Naive thymus-derived CD4-positive, alpha-beta T cell (primary cell): ENCODE measurements at regions of chr9 and their contacts with region 1.

Region 1: GRCh38 chr9:665296-665695 is 176.2 kb upstream of the DMRT1 start:
- DNase-seq: no peak
- ATAC-seq: no peak
- H3K4me3 ChIP-seq: no peak overlapping the region
- H3K4me3 Mint-ChIP-seq: no peak overlapping the region
- H3K27ac ChIP-seq: no peak overlapping the region
- H3K27ac Mint-ChIP-seq: no peak overlapping the region
- H3K4me1 ChIP-seq: no peaks in the 10 kb centered on the region
- H3K4me1 Mint-ChIP-seq: peaks cover 0 to 4% (median 0%) of the 10 kb centered on the region in 7 donors
- H3K27me3 ChIP-seq: no peaks in the 10 kb centered on the region
- H3K27me3 Mint-ChIP-seq: peaks cover 0 to 19% (median 9%) of the 10 kb centered on the region in 5 donors

Region 2: DNA sequence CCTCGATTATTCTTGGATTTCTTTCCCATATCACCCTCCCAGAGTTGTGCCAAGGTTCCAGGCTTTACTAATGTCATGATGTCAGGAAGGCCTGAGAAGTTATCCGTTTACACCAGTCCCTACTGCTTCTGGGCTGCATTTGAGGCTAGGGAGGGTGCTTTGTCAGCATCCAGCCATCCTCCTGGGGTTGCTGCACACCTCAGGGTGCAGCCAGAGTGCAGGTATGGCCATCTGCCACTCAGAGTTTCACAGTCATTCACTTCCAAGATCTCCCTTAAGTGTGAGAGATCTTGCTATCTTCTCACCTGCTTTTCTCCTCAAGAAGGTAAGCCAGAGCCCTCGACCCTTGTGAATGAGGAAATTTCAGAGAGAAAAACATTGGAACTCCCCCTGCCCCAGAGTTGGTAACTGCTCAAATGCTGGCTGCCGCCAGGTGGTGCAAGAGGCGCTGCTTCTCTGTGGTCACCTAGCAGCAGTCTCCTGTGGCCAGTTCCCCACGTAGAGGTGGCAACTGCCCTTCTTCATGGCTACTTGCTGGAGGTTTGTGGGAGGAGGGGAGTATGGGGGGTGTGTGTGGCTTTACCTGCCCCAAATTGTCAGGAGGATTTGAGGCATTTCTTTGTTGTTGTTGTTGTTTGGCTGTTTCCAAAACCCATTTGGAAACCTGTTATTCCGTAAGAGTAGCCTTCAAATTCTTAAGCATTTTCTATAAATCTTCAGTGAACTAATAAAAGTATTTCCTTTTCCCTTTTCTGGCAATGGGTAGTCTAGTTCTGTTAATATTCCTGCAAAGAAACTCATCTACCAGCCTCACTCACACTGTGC is 83.4 kb before region 1 on chr9:
- CTCF ChIA-PET with region 1: no interaction called
- POLR2A ChIA-PET with region 1: no interaction called
- intact Hi-C with region 1: no loop called
- DNase-seq: no peak
- ATAC-seq: no peak
- H3K4me3 ChIP-seq: no peak overlapping the region
- H3K4me3 Mint-ChIP-seq: no peak overlapping the region
- H3K27ac ChIP-seq: no peak overlapping the region
- H3K27ac Mint-ChIP-seq: peak overlapping the region in 1 of 9 donors; percentile 48
- H3K4me1 ChIP-seq: no peaks in the 10 kb centered on the region
- H3K4me1 Mint-ChIP-seq: peaks cover 0 to under 1% (median 0%) of the 10 kb centered on the region in 7 donors
- H3K27me3 ChIP-seq: peaks cover 0 to 3% of the 10 kb centered on the region in 2 donors
- H3K27me3 Mint-ChIP-seq: peaks cover 0 to 4% (median 0%) of the 10 kb centered on the region in 5 donors

Region 3: DNA sequence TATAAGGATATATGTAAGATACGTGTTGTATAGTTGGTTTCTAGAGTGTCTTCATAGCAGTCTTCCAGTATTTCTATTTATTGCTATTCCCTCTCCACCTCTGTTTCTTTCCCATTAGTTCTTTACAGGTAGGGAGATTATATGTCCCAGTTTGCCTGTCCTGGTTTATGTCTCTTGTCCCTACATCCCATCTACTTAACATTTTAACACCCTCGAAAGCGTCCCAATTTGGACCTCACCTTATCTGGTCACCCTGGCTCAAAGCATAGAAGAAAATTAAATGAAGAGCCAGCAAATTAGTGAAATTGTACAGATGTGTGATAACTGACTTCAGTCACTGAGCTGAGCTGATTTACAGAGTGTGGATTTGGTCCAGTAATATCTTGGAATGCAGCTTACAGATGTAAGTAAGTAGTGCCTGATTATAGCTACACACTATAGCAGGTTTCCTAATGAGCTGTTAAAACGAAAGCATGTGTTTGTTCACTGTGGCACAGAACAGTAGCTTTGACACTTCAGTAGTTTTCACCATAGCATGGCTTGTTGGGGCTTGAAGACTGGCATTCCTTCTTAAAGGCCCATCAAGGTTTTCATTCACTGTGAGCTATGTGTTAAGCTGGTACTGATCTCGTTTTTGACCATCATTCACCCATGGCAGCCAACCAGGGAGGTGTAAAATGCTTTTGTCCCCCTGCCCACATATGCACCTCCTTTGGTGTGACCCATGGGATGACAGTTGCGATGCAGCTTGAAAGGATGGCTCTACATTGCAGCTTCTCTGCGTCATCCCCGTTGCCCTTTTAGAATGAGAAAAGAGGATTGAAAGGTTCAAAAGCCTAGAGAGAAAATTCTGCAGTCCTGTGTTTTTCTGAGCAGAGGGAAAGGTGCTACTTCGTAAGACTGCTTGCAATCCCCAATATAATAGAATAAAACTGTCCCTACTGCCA is 15.9 kb before region 1 on chr9:
- CTCF ChIA-PET with region 1: no interaction called
- POLR2A ChIA-PET with region 1: no interaction called
- intact Hi-C with region 1: loop called in 1 of 2 experiments (anchors 2 kb)
- DNase-seq: no peak
- ATAC-seq: no peak
- H3K4me3 ChIP-seq: peak overlapping the region; percentile 27
- H3K4me3 Mint-ChIP-seq: peak overlapping the region in 9 of 10 donors; percentile 35 to 87 (median 81)
- H3K27ac ChIP-seq: no peak overlapping the region
- H3K27ac Mint-ChIP-seq: peak overlapping the region in 5 of 9 donors; percentile 49 to 77 (median 61)
- H3K4me1 ChIP-seq: peaks cover 0 to 16% of the 10 kb centered on the region in 2 donors
- H3K4me1 Mint-ChIP-seq: peaks cover 14 to 33% (median 30%) of the 10 kb centered on the region in 7 donors
- H3K27me3 ChIP-seq: no peaks in the 10 kb centered on the region
- H3K27me3 Mint-ChIP-seq: no peaks in the 10 kb centered on the region